Heart right ventricle (tissue), 16 donors: ENCODE measurements at regions of chr3 and their contacts with region 1.

Region 1: DNA sequence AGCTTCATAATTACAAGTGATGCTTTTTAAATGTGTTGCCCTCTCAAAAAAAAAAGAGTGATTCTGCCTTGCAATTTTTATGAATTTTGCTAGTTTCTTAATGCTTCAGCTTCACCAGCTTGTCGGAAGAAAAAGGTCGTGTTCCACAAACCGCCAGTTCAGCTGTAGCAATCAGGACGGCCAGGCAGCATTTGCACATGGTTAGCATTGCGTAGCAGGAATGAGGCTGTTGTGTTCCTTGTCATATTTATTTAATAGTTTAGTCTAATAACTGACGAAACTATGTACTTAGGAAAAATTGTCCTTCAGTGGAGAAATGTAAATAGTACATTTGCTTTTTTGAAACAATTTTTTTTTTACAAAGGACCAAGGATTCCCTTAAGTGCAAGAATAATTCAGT is 64.9 kb upstream of the SELENOK start:
- DNase-seq: no peak
- ATAC-seq: no peak
- H3K4me3 ChIP-seq: no peak overlapping the region
- H3K27ac ChIP-seq: no peak overlapping the region
- H3K4me1 ChIP-seq: no peaks in the 10 kb centered on the region
- H3K27me3 ChIP-seq: peaks cover 0 to 6% (median 0%) of the 10 kb centered on the region in 7 donors
- CTCF ChIP-seq: no peak

Region 2: DNA sequence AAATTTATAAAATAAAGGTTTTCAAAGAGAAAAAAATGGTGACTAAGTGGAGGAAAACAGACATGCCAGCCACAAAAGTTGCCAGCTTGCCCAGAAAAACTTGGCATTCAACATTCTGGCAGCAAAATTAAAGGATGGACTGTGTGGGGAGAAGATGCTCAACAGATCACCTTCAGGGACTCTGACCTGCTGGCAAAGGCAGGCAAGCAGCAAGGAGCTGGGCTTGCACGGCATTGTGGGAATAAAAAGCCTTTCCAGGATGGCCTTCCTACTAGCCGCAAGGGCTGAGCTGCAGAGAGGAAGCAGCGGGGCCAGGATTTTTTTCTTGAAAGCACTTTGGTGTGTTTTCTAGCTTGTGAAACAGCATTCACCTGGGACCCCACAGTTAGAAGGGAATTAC is 63.9 kb after region 1 on chr3:
- intact Hi-C with region 1: no loop called
- DNase-seq: no peak
- ATAC-seq: no peak
- H3K4me3 ChIP-seq: no peak overlapping the region
- H3K27ac ChIP-seq: no peak overlapping the region
- H3K4me1 ChIP-seq: no peaks in the 10 kb centered on the region
- H3K27me3 ChIP-seq: peaks cover 0 to 4% (median 0%) of the 10 kb centered on the region in 7 donors
- CTCF ChIP-seq: no peak

Region 3: DNA sequence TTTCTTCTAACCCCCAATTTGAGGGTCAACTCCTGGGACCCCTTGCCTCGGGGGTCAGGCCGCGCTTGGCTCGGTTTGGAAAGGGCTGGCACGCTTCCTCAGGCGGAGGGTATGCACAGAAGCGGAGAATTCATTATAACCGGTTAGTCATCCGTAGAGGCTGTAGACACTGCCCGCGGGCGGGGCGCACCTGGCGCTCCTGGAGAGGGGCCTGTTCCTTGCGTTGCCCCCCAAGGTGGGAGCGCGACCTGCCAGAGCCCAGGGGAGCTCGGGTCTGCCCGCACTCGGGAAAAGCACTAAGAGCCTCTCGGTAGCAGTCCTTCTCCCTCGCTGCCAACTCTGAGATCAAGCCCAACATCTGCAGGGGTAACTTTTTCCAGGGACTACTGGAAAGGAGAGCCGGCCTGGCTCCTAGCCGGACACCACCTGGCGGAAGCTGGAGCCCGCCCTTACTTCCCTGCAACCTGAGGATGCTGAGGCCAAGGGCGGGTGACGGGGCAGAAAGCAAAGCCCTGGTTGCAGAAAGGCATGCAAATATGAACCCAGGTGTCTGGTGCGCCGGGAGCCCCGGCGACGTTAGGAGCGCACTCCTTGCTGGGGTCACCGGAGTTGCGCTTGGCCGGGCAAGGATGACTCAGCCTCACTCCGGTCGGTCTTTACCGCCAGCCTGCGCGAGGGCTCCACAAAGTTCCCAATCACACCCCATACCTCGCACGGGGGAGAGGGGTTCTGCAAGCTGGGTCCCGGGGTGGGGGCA is 164.2 kb after region 1 on chr3:
- intact Hi-C with region 1: loop called in 1 of 10 experiments (anchors 10 kb)
- DNase-seq: peak in 1 of 2 donors; percentile 17
- ATAC-seq: peak in 4 of 8 donors; percentile 34 to 51 (median 44)
- H3K4me3 ChIP-seq: peak overlapping the region; percentile 38 to 70 (median 60)
- H3K27ac ChIP-seq: no peak overlapping the region
- H3K4me1 ChIP-seq: peaks cover 2 to 15% (median 11%) of the 10 kb centered on the region in 9 donors
- H3K27me3 ChIP-seq: peaks cover 0 to 70% (median 34%) of the 10 kb centered on the region in 7 donors
- CTCF ChIP-seq: no peak